ENCODE measurements at regions of chr2 and their contacts with region 1.

Region 1: DNA sequence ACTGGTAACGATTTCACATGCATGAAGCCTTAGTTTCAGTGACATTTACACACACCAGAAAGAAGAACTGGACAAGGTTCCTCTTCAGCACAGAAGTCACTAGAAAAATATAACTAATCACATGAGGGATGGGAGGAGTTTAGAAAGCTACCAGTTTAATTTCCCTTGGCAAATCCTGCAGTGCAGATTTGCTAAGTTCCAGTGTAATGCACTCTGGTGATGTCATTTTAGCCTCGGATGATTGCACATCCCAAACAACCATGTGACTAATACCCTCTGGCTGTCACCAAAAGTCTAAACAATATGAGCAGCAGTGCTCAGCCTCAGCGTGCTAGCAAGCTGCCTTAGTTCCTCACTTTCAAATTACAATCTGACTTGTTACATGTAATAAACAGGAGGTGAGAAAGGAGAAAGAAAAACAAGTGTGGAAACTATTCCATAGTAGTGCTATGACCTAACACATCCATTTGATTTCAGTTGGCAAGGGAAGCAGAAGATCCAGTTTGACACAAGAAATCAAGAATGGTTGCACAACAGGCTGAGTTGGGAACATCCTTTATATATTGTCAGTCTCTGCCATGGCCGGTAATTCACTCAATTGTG is 35.3 kb upstream of the PPP1CB start:
- DNase-seq: peak; percentile 90
- H3K4me3 Mint-ChIP-seq: peak overlapping the region; percentile 42
- H3K27ac Mint-ChIP-seq: peak overlapping the region; percentile 97
- H3K4me1 Mint-ChIP-seq: peaks cover 30% of the 10 kb centered on the region
- H3K27me3 Mint-ChIP-seq: no peaks in the 10 kb centered on the region
- CTCF ChIP-seq: no peak

Region 2: GRCh38 chr2:28239207-28239606 is 477.2 kb before region 1 on chr2:
- CTCF ChIA-PET with region 1: no interaction called
- POLR2A ChIA-PET with region 1: no interaction called
- intact Hi-C with region 1: no loop called
- DNase-seq: no peak
- H3K4me3 Mint-ChIP-seq: no peak overlapping the region
- H3K27ac Mint-ChIP-seq: no peak overlapping the region
- H3K4me1 Mint-ChIP-seq: no peaks in the 10 kb centered on the region
- H3K27me3 Mint-ChIP-seq: no peaks in the 10 kb centered on the region
- CTCF ChIP-seq: no peak

Region 3: GRCh38 chr2:28610583-28611201 is 105.7 kb before region 1 on chr2:
- CTCF ChIA-PET with region 1: no interaction called
- POLR2A ChIA-PET with region 1: interaction called, 10 read pairs
- intact Hi-C with region 1: loop called (anchors 1 kb)
- DNase-seq: peak; percentile 92
- H3K4me3 Mint-ChIP-seq: peak overlapping the region; percentile 24
- H3K27ac Mint-ChIP-seq: peak overlapping the region; percentile 95
- H3K4me1 Mint-ChIP-seq: peaks cover 34% of the 10 kb centered on the region
- H3K27me3 Mint-ChIP-seq: no peaks in the 10 kb centered on the region
- CTCF ChIP-seq: no peak

Region 4: GRCh38 chr2:28643911-28644334 is 72.4 kb before region 1 on chr2:
- CTCF ChIA-PET with region 1: no interaction called
- POLR2A ChIA-PET with region 1: interaction called, 5 read pairs
- intact Hi-C with region 1: loop called (anchors 2 kb)
- DNase-seq: peak; percentile 76
- H3K4me3 Mint-ChIP-seq: peak overlapping the region; percentile 47
- H3K27ac Mint-ChIP-seq: peak overlapping the region; percentile 59
- H3K4me1 Mint-ChIP-seq: peaks cover 35% of the 10 kb centered on the region
- H3K27me3 Mint-ChIP-seq: no peaks in the 10 kb centered on the region
- CTCF ChIP-seq: no peak

Region 5: DNA sequence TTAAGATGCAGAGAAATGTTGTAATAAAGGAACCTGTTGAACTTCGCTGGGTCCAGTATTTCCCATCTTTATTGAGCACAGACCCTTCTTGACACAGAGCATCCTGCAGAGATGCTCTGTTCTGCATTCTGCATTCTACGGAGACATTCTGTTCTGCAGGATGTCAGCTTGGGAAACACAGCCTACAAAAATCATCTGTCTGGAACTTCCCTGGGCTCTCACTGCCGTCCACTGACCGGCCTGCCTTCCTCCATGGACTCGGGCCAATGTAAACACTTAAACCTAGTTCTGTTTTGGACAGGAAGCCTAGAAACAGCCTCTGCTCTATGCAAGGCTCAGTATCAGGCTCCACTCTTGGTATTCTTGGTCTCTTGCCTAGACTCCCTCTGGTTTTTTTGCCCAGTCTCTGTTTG is 54.8 kb before region 1 on chr2:
- CTCF ChIA-PET with region 1: no interaction called
- POLR2A ChIA-PET with region 1: interaction called, 21 read pairs
- intact Hi-C with region 1: no loop called
- DNase-seq: peak; percentile 88
- H3K4me3 Mint-ChIP-seq: no peak overlapping the region
- H3K27ac Mint-ChIP-seq: peak overlapping the region; percentile 78
- H3K4me1 Mint-ChIP-seq: peaks cover 44% of the 10 kb centered on the region
- H3K27me3 Mint-ChIP-seq: no peaks in the 10 kb centered on the region
- CTCF ChIP-seq: no peak

Region 6: GRCh38 chr2:28729698-28730097 is 13.3 kb after region 1 on chr2:
- CTCF ChIA-PET with region 1: interaction called, 3 read pairs
- POLR2A ChIA-PET with region 1: interaction called, 19 read pairs
- intact Hi-C with region 1: no loop called
- DNase-seq: no peak
- H3K4me3 Mint-ChIP-seq: no peak overlapping the region
- H3K27ac Mint-ChIP-seq: no peak overlapping the region
- H3K4me1 Mint-ChIP-seq: no peaks in the 10 kb centered on the region
- H3K27me3 Mint-ChIP-seq: no peaks in the 10 kb centered on the region
- CTCF ChIP-seq: no peak

Region 7: GRCh38 chr2:28780496-28780895 is 64.1 kb after region 1 on chr2:
- CTCF ChIA-PET with region 1: no interaction called
- POLR2A ChIA-PET with region 1: no interaction called
- intact Hi-C with region 1: no loop called
- DNase-seq: no peak
- H3K4me3 Mint-ChIP-seq: no peak overlapping the region
- H3K27ac Mint-ChIP-seq: no peak overlapping the region
- H3K4me1 Mint-ChIP-seq: peaks cover 10% of the 10 kb centered on the region
- H3K27me3 Mint-ChIP-seq: no peaks in the 10 kb centered on the region
- CTCF ChIP-seq: no peak

Measured in MCF 10A (cell line).